Activated CD8-positive, alpha-beta T cell treated with anti-CD3 and anti-CD28 coated beads for 36 hours (primary cell): ENCODE measurements at regions of chr14 and their contacts with region 1.

Region 1: GRCh38 chr14:65824285-65824977 is 411.9 kb downstream of the FUT8 start:
- DNase-seq: peak; percentile 68
- ATAC-seq: peak; percentile 98
- H3K4me3 Mint-ChIP-seq: no peak overlapping the region
- H3K27ac Mint-ChIP-seq: no peak overlapping the region
- H3K4me1 Mint-ChIP-seq: peaks cover 7% of the 10 kb centered on the region
- H3K27me3 Mint-ChIP-seq: no peaks in the 10 kb centered on the region
- CTCF ChIP-seq: peak; percentile 88

Region 2: DNA sequence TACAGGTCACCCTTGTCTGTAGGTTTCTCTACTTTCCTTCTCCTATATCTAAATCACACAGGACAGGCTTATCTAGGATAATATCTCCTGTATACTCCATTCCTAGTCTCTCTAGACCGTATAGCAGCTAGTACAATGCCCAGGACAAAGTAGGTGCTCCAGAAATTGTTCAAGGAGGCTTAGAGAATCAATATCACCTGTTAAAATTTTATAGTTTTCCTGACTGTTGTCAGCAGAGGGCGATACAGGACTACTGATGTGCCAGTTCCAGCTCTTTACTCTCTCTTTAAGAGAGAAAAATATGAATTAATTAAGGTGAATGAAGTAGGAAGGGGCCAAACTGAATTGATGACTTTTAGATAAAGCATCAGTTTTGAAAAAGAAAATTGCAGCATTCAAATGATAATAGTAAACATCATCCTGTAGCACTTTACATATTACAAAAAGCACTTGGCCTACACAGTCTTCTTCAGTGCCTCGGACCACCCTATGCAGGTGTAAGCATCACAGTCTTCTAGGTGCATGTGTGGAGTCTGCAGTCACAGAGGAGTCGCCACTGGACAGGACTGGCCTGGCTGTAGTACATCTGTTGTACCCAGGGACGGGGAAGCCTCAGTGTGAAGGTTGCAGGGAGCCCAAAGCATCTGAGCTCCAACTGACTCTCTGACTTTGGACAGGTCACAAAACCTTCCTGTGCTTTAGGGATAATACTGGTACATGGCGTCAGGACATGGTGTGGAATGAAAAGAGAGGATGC is 660.2 kb before region 1 on chr14:
- CTCF ChIA-PET with region 1: interaction called, 36 read pairs
- POLR2A ChIA-PET with region 1: interaction called, 4 read pairs
- intact Hi-C with region 1: loop called (anchors 2 kb)
- DNase-seq: peak; percentile 54
- ATAC-seq: peak; percentile 65
- H3K4me3 Mint-ChIP-seq: no peak overlapping the region
- H3K27ac Mint-ChIP-seq: no peak overlapping the region
- H3K4me1 Mint-ChIP-seq: peaks cover 24% of the 10 kb centered on the region
- H3K27me3 Mint-ChIP-seq: no peaks in the 10 kb centered on the region
- CTCF ChIP-seq: peak; percentile 79

Region 3: DNA sequence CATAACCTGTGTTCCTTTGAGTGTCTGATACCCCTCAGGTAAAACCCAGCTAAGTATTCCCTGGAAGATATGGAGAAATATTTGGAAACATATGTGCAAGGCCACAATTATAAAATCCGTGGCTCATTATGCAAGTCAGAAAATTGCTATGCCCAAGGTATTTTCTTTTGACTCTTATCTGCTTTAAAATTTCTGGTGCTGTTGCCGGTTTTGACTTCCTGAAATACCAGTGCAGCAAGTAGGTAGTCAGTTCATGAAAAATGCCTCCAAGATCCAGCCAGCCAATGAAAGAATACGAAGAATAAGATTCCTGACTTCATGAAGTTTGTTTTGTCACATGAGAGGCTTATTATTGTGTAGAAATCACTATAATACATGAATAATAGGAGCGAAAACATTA is 432.1 kb before region 1 on chr14:
- CTCF ChIA-PET with region 1: no interaction called
- POLR2A ChIA-PET with region 1: no interaction called
- intact Hi-C with region 1: no loop called
- DNase-seq: no peak
- ATAC-seq: no peak
- H3K4me3 Mint-ChIP-seq: no peak overlapping the region
- H3K27ac Mint-ChIP-seq: no peak overlapping the region
- H3K4me1 Mint-ChIP-seq: peaks cover 33% of the 10 kb centered on the region
- H3K27me3 Mint-ChIP-seq: no peaks in the 10 kb centered on the region
- CTCF ChIP-seq: no peak

Region 4: DNA sequence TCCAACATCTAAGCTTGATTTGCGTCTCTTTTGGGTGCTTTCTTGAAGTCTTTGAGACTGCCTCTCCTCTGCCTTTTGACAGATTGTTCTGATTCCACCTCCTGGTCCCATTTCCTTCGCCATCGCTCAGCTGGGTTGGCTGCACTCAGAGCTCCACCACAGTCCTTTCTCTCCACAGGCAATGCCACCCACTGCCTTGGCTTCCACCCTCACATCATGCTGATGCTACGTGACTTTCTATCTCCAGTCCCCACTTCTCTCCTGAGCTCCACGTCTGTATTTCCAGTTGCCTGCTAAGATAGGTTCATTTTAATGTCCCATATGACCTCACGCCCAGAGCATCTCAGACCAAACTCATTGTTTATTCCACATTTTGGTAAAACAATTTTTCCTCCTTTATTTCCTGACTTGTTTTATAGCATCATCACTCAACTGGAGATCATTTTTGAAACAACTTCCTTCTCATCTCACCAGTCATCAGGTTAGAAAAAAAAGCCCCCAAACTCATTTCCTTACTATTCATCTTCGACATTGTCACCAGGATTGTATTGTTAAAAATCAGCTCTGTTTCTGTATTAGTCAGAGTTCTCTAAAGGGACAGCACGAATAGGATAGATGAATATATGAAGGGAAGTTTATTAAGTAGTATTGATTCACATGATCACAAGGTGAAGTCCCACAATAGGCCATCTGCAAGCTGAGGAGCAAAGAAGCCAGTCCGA is 19.5 kb before region 1 on chr14:
- CTCF ChIA-PET with region 1: interaction called, 88 read pairs
- POLR2A ChIA-PET with region 1: no interaction called
- intact Hi-C with region 1: no loop called
- DNase-seq: no peak
- ATAC-seq: peak; percentile 45
- H3K4me3 Mint-ChIP-seq: no peak overlapping the region
- H3K27ac Mint-ChIP-seq: no peak overlapping the region
- H3K4me1 Mint-ChIP-seq: peaks cover 3% of the 10 kb centered on the region
- H3K27me3 Mint-ChIP-seq: no peaks in the 10 kb centered on the region
- CTCF ChIP-seq: no peak

Region 5: DNA sequence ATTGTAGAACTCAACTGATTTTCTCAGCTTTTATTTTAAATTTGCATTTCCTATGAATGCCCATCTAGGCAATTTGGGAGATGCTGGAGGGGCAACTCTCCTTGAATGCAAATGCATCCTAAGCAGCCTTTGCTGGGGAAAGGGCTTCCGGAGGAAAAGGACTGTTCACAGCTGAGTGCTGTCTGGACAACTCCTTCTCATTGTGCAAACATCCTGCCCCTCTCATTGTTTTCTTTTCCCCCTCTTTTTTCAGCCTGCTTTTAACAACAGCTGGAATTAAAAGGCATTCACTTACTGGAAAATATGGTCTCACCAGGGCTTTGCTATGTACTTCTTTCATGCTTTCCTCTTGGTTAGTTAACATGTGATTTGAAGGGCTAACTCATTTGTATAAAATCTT is 14.1 kb before region 1 on chr14:
- CTCF ChIA-PET with region 1: interaction called, 88 read pairs
- POLR2A ChIA-PET with region 1: no interaction called
- intact Hi-C with region 1: no loop called
- DNase-seq: no peak
- ATAC-seq: no peak
- H3K4me3 Mint-ChIP-seq: no peak overlapping the region
- H3K27ac Mint-ChIP-seq: no peak overlapping the region
- H3K4me1 Mint-ChIP-seq: no peaks in the 10 kb centered on the region
- H3K27me3 Mint-ChIP-seq: no peaks in the 10 kb centered on the region
- CTCF ChIP-seq: no peak

Region 6: GRCh38 chr14:65840118-65840751 is 15.8 kb after region 1 on chr14:
- CTCF ChIA-PET with region 1: interaction called, 16 read pairs
- POLR2A ChIA-PET with region 1: no interaction called
- intact Hi-C with region 1: no loop called
- DNase-seq: no peak
- ATAC-seq: no peak
- H3K4me3 Mint-ChIP-seq: no peak overlapping the region
- H3K27ac Mint-ChIP-seq: no peak overlapping the region
- H3K4me1 Mint-ChIP-seq: peaks cover 60% of the 10 kb centered on the region
- H3K27me3 Mint-ChIP-seq: no peaks in the 10 kb centered on the region
- CTCF ChIP-seq: no peak

Region 7: GRCh38 chr14:65847075-65847847 is 22.8 kb after region 1 on chr14:
- CTCF ChIA-PET with region 1: interaction called, 15 read pairs
- POLR2A ChIA-PET with region 1: interaction called, 3 read pairs
- intact Hi-C with region 1: no loop called
- DNase-seq: peak; percentile 86
- ATAC-seq: peak; percentile 80
- H3K4me3 Mint-ChIP-seq: peak overlapping the region; percentile 38
- H3K27ac Mint-ChIP-seq: peak overlapping the region; percentile 82
- H3K4me1 Mint-ChIP-seq: peaks cover 67% of the 10 kb centered on the region
- H3K27me3 Mint-ChIP-seq: no peaks in the 10 kb centered on the region
- CTCF ChIP-seq: no peak

Region 8: GRCh38 chr14:66070509-66071319 is 246.3 kb after region 1 on chr14:
- CTCF ChIA-PET with region 1: interaction called, 19 read pairs
- POLR2A ChIA-PET with region 1: no interaction called
- intact Hi-C with region 1: no loop called
- DNase-seq: peak; percentile 79
- ATAC-seq: peak; percentile 90
- H3K4me3 Mint-ChIP-seq: no peak overlapping the region
- H3K27ac Mint-ChIP-seq: no peak overlapping the region
- H3K4me1 Mint-ChIP-seq: no peaks in the 10 kb centered on the region
- H3K27me3 Mint-ChIP-seq: no peaks in the 10 kb centered on the region
- CTCF ChIP-seq: peak; percentile 90

Region 9: DNA sequence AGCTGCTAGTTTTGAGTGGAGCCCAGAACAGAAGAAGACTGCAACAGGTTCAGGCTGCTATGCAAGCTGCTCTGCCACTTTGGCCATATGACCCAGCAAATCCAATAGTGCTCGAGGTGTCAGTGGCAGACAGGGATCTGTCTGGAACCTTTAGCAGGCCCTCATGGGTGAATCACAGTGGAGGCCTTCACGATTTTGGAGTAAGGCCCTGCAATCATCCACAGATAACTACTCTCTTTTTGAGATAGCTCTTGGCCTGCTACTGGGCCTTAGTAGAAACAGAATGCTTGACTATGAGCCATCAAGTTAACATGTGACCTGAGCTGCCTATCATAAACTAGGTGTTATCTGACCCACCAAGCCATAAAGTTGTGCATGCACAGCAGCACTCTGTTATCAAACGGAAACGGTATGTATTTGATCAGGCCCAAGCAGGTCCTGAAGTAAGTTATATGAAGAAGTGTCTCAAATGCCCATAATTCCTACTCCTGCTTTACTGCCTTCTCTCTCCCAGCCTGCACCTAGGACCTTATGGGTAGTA is 544.8 kb after region 1 on chr14:
- CTCF ChIA-PET with region 1: no interaction called
- POLR2A ChIA-PET with region 1: no interaction called
- intact Hi-C with region 1: no loop called
- DNase-seq: no peak
- ATAC-seq: no peak
- H3K4me3 Mint-ChIP-seq: no peak overlapping the region
- H3K27ac Mint-ChIP-seq: no peak overlapping the region
- H3K4me1 Mint-ChIP-seq: no peaks in the 10 kb centered on the region
- H3K27me3 Mint-ChIP-seq: no peaks in the 10 kb centered on the region
- CTCF ChIP-seq: no peak